Aorta (tissue), 5 donors: ENCODE measurements at regions of chr3 and their contacts with region 1.

Region 1: DNA sequence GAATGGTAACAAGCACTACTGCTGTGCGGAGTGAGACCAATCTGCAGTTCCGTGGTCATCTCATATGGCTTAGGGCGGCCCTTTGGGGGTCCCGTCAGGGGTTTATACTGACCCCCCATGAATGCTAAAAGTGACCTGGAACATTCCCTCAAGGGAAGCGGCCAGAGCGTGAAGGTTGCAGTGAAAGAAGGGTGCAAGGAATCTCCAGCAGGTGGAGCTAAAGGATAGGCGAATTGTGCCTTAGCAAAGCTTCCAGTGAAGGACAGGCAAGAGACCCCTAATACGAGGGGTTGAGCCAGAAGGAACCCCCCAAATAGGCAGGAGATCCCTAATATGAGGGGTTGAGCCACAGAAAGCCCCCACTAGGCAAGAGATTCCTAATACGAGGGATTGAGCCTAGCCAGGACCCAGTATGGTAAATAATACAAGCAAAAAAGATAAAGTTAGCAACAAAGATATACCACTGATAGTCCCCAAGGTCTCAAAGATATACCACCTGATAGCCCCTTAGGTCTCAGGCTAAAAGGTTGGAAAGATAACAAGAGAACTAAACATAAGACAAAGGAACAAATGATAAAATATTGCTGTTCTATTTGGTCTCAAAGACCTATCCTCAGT is 32.8 kb downstream of the ZNF589 start:
- DNase-seq: no peak
- ATAC-seq: peak; percentile 56
- H3K4me3 ChIP-seq: no peak overlapping the region
- H3K27ac ChIP-seq: no peak overlapping the region
- H3K4me1 ChIP-seq: no peaks in the 10 kb centered on the region
- H3K27me3 ChIP-seq: no peaks in the 10 kb centered on the region

Region 2: DNA sequence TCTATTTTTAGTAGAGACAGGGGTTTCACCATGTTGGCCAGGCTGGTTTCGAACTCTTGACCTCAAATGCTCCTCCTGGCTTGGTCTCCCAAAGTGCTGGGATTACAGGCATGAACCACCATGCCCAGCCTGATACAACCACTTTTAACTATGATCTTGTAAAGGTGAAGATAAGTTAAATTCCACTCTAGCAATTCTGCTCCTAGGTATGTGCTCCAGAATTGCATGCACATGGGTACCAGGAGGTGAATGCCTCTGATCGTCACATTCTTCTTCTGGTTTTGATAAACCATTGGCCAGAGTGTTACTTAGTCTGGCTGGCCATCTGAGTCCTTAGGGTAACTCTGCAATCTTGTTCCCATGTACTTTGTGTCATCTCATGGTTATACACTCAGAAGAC is 717.4 kb before region 1 on chr3:
- intact Hi-C with region 1: no loop called
- DNase-seq: no peak
- ATAC-seq: no peak
- H3K4me3 ChIP-seq: no peak overlapping the region
- H3K27ac ChIP-seq: no peak overlapping the region
- H3K4me1 ChIP-seq: no peaks in the 10 kb centered on the region
- H3K27me3 ChIP-seq: no peaks in the 10 kb centered on the region

Region 3: GRCh38 chr3:48435774-48436476 is 162.2 kb after region 1 on chr3:
- intact Hi-C with region 1: loop called (anchors 2 kb)
- DNase-seq: peak; percentile 90 to 94
- ATAC-seq: peak; percentile 84
- H3K4me3 ChIP-seq: no peak overlapping the region
- H3K27ac ChIP-seq: no peak overlapping the region
- H3K4me1 ChIP-seq: no peaks in the 10 kb centered on the region
- H3K27me3 ChIP-seq: no peaks in the 10 kb centered on the region

Region 4: DNA sequence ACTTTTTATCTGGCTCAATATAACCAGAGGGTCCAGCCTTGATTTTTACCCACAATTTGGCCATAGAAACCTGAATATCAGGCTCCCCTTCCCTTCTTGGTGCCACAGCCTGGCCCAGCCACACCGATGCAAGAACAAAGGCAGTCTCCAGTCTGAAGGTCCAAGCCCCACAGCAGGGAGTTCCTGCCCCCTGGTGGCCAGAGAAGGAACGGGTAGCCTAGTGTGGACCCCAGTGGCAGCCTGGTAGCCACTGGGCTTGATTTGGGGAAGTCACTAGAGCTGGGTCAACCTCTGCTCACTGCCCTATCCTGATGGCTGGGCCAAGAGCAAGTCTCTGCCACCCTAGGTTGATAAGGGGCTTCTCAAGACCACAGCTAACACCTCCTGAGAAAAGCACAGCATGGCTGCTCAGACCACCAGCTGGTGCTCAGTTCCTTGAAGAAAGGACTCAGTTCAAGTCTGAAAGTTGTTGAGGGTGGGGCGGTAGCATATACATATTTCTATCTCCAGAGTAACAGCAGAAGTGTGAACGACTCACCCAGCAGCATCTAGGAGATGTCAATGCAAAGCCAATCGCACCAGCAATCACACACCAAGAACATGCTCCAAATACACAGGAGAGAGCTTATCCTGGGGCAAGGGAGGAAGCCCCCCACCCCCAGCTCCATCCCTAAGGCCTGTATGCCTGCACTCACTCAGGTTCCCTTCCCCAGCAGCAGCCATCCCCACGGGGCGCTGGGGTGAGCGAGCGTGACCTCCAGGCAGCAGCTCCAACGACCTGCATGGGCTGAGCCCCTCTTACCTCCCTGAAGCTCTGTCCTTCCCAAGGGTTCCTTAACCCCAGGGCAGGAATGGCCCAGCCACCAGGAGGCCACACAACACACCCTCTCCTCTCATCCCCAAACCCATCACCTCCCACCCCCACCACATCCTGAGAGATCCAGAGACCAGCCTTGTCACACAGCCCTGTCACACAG is 275.3 kb after region 1 on chr3:
- intact Hi-C with region 1: loop called in 1 of 2 experiments (anchors 10 kb)
- DNase-seq: peak; percentile 91 to 95
- ATAC-seq: peak; percentile 93
- H3K4me3 ChIP-seq: no peak overlapping the region
- H3K27ac ChIP-seq: no peak overlapping the region
- H3K4me1 ChIP-seq: no peaks in the 10 kb centered on the region
- H3K27me3 ChIP-seq: no peaks in the 10 kb centered on the region